ENCODE measurements at regions of chr19 and their contacts with region 1.

Region 1: GRCh38 chr19:18281082-18282020 is at the start of gene JUND:
- DNase-seq: peak; percentile 72
- H3K4me3 ChIP-seq: peak within 1 kb of the TSS; percentile 94
- CTCF ChIP-seq: no peak

Region 2: DNA sequence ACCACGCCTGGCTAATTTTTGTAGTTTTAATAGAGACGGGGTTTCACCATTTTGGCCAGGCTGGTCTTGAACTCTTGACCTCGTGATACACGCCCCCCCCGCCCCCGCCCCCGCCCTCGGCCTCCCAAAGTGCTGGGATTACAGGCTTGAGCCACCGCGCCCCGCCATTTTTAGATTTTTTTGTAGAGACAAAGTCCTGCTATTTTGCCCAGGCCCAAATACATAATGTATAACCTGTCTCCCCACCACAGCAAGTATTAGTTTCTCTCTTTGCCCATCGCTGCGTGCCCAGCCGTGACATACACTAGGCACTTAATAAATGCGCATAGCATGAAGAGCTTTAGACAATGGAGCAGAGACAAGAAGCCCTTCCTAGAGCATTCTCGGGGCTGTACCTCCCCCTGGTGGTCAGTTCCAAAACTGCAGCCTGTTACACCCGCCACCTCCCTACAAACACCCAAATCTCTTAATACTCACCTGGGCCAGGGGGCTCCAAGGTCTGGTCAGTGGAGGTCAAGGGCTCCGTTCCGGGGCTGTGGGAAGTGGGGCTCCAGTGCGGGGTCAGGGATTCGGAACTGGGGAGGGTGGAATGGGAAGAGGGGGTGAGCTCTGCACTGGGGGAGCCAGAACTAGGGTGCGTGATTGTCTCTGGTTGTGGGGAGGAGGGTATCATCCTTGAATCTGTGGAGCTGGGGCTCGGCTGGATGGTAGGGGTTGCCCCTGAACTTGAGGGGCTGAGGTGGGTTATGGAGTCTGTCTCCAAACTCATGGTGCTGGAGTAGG is 29.6 kb before region 1 on chr19:
- CTCF ChIA-PET with region 1: interaction called, 18 read pairs
- POLR2A ChIA-PET with region 1: interaction called, 4 read pairs
- DNase-seq: no peak
- H3K4me3 ChIP-seq: no peak overlapping the region
- CTCF ChIP-seq: peak; percentile 85

Region 3: DNA sequence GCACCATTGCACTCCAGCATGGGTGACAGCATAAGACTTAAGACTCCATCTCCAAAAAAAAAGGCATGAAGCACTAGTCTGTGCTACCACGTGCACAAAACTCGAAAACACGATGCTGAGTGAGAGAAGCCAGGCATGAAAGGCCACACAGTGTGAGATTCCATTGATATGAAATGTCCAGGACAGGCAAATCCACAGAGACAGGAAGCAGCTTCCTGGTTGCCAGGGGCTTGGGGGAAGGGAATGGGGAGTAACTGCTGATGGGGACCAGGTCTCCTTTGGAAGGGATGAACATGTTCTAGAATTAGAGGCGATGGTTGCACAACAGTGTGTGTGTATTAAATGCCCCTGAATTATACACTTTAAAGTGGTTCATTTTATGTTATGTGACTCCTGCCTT is 16.0 kb after region 1 on chr19:
- CTCF ChIA-PET with region 1: interaction called, 65 read pairs
- POLR2A ChIA-PET with region 1: interaction called, 129 read pairs
- DNase-seq: no peak
- H3K4me3 ChIP-seq: no peak overlapping the region
- CTCF ChIP-seq: no peak

Region 4: GRCh38 chr19:18322759-18323460 is 41.6 kb after region 1 on chr19 and contains the start of gene LSM4:
- CTCF ChIA-PET with region 1: interaction called, 321 read pairs
- POLR2A ChIA-PET with region 1: interaction called, 146 read pairs
- DNase-seq: peak; percentile 65
- H3K4me3 ChIP-seq: peak within 1 kb of the TSS; percentile 84
- CTCF ChIP-seq: peak; percentile 41

Region 5: GRCh38 chr19:18340190-18340989 is 59.0 kb after region 1 on chr19 and contains the start of gene PGPEP1:
- CTCF ChIA-PET with region 1: interaction called, 56 read pairs
- POLR2A ChIA-PET with region 1: interaction called, 18 read pairs
- DNase-seq: no peak
- H3K4me3 ChIP-seq: peak within 1 kb of the TSS; percentile 80
- CTCF ChIP-seq: no peak

Region 6: DNA sequence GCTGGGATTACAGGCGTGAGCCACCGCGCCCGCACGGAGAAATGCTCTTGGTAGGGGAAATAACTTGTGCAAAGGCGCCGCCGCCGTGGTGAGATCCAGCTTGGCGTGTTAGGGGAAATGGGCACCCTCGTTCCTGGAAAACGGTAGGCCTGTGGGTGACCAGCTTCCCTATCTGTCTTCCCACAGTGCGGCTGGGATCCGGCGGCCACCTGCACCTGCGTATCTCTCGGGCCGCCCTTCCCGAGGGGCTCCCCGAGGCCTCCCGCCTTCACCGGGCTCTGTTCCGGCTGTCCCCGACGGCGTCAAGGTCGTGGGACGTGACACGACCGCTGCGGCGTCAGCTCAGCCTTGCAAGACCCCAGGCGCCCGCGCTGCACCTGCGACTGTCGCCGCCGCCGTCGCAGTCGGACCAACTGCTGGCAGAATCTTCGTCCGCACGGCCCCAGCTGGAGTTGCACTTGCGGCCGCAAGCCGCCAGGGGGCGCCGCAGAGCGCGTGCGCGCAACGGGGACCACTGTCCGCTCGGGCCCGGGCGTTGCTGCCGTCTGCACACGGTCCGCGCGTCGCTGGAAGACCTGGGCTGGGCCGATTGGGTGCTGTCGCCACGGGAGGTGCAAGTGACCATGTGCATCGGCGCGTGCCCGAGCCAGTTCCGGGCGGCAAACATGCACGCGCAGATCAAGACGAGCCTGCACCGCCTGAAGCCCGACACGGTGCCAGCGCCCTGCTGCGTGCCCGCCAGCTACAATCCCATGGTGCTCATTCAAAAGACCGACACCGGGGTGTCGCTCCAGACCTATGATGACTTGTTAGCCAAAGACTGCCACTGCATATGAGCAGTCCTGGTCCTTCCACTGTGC is 107.0 kb after region 1 on chr19:
- CTCF ChIA-PET with region 1: interaction called, 37 read pairs
- POLR2A ChIA-PET with region 1: interaction called, 21 read pairs
- DNase-seq: no peak
- H3K4me3 ChIP-seq: peak overlapping the region; percentile 66
- CTCF ChIP-seq: peak; percentile 97

Region 7: DNA sequence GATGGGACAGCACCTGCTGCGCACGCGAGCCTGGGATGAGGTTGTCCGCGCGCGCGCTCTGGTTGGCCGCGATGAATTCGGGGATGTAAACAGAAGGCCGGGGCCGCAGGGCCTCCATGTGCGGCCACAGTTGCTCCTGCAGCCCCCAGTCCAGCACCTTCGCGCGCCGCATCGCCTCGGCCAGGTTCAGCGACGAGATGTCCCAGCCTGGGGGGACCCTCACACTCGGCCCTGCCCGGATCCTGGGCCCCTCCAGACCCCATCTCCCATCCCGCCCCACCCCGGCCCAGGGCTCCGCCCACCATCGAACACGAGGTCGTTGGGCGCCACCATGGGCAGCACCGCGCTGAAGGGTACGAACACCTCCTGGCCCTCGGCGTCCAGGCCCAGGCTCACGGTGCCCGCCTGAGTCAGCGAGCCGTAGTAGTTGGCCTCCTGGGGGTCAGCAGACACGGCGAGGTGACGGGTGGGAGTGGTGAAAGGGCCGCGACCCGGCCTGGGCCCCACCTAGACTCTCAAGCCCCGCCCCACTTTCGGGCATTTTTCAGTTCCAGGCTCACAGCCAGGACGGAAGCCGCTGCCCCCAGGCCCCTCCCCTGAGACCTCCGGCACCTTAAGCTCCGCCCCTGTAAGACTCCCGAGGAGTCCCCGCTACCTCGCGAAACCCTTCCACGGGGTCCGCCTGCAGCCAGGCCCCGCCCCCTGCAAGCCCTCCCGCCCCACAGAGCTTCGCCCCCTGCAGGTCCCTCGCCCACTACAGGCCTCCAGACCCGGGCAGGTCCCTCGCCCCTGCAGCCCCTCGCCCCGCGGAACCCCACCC is 155.5 kb after region 1 on chr19:
- CTCF ChIA-PET with region 1: no interaction called
- POLR2A ChIA-PET with region 1: no interaction called
- DNase-seq: no peak
- H3K4me3 ChIP-seq: peak overlapping the region; percentile 68
- CTCF ChIP-seq: no peak

Region 8: GRCh38 chr19:18712981-18713380 is 431.6 kb after region 1 on chr19:
- CTCF ChIA-PET with region 1: no interaction called
- POLR2A ChIA-PET with region 1: no interaction called
- DNase-seq: no peak
- H3K4me3 ChIP-seq: no peak overlapping the region
- CTCF ChIP-seq: no peak